ENCODE measurements at regions of chr6 and their contacts with region 1.

Region 1: DNA sequence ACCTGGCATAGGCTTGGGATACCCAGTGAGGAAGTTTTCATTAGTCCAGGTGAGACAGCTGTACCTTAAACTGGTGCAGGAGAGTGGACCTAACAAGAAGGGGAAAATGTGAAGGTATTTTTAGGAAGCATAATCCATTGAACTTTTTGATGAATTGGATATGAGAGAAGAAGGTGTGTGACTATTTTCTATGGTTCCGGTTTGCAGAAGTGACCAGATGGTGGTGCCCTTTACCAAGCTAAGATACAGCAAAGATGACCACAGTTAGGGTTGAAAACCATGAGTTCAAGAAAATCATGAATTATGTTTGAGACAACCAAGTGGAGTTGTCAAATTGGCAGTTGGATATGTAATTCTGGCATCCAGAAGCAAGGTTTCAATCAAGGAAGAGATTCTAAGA is 61.9 kb upstream of the NRSN1 start:
- DNase-seq: no peak
- H3K4me3 ChIP-seq: no peak overlapping the region
- H3K27ac ChIP-seq: no peak overlapping the region
- H3K4me1 ChIP-seq: no peaks in the 10 kb centered on the region
- H3K27me3 ChIP-seq: no peaks in the 10 kb centered on the region
- CTCF ChIP-seq: no peak
- EP300 ChIP-seq: no peak
- POLR2A ChIP-seq: no peak

Region 2: DNA sequence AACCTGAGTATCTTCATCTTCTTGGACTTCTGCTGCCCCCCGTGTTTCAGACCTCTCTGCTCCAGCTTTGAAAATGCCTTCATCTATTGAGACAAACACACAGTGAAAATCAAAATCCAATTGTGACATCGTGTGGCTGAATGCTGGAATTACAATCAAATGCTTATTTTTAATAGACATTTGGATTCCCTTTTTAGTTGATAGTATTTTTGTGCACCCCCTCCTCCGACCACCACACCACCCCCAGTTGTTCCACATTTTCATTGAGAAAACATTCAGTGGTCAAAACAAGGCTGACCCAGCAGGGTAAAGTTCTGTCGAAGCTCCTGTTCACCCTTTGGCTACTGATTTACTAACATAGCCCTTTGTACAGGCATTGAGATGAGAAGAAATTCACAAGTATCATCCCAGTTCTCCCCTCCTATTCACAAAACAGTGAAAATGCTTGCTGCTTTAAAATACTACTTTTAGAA is 141.0 kb after region 1 on chr6:
- intact Hi-C with region 1: loop called (anchors 10 kb)
- DNase-seq: no peak
- H3K4me3 ChIP-seq: no peak overlapping the region
- H3K27ac ChIP-seq: no peak overlapping the region
- H3K4me1 ChIP-seq: no peaks in the 10 kb centered on the region
- H3K27me3 ChIP-seq: no peaks in the 10 kb centered on the region
- CTCF ChIP-seq: peak; percentile 37 to 65 (median 60)
- EP300 ChIP-seq: no peak
- POLR2A ChIP-seq: no peak

Region 3: GRCh38 chr6:24274441-24275083 is 210.5 kb after region 1 on chr6:
- intact Hi-C with region 1: loop called (anchors 10 kb)
- DNase-seq: no peak
- H3K4me3 ChIP-seq: no peak overlapping the region
- H3K27ac ChIP-seq: no peak overlapping the region
- H3K4me1 ChIP-seq: peaks cover 0 to 4% (median 0%) of the 10 kb centered on the region in 4 donors
- H3K27me3 ChIP-seq: no peaks in the 10 kb centered on the region
- CTCF ChIP-seq: peak; percentile 13 to 49 (median 30)
- EP300 ChIP-seq: no peak
- POLR2A ChIP-seq: no peak

Measured in sigmoid colon (tissue), 7 donors.